Lower lobe of right lung (tissue), 2 donors: ENCODE measurements at regions of chr1 and their contacts with region 1.

Region 1: GRCh38 chr1:157193702-157194391 is 55.7 kb upstream of the ETV3 start:
- DNase-seq: peak; percentile 71
- ATAC-seq: no peak
- H3K4me3 ChIP-seq: no peak overlapping the region
- H3K27ac ChIP-seq: no peak overlapping the region
- H3K4me1 ChIP-seq: no peaks in the 10 kb centered on the region
- H3K27me3 ChIP-seq: peaks cover 37% of the 10 kb centered on the region
- CTCF ChIP-seq: peak; percentile 60

Region 2: DNA sequence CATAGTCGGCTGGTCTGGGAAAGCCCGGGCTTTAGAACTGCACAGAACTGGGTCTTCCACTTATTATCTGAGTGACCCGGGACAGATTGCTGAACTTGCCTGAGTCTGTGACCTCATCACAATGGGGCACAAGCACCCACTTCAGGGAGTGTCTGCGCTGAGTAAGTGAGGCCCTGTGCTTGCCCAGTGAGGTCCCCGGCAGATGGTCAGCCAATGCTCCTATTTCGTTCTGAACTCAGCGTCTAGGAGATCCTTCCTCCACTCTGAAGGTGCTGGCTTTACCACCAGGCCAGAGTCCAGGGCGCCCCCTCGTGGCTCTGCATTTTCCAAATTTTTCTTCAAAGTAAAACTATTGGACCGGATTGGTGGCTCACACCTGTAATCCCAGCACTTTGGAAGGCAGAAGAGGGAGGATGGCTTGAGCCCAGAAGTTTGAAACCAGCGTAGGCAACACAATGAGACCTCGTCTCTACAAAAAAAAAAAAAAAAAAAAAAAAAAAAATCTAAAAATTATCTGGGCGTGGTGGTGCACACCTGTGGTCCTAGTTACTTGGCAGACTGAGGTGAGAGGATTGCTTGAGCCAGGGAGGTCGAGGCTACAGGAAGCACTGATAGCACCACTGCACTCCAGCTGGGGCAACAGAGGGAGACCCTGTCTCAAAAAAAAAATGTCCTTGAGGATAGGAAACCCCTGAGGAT is 296.8 kb after region 1 on chr1:
- intact Hi-C with region 1: loop called (anchors 10 kb)
- DNase-seq: peak; percentile 76
- ATAC-seq: peak; percentile 78 to 83
- H3K4me3 ChIP-seq: no peak overlapping the region
- H3K27ac ChIP-seq: no peak overlapping the region
- H3K4me1 ChIP-seq: no peaks in the 10 kb centered on the region
- H3K27me3 ChIP-seq: peaks cover 9% of the 10 kb centered on the region
- CTCF ChIP-seq: peak; percentile 58